CD4-positive, alpha-beta memory T cell (primary cell): ENCODE measurements at regions of chr18 and their contacts with region 1.

Region 1: DNA sequence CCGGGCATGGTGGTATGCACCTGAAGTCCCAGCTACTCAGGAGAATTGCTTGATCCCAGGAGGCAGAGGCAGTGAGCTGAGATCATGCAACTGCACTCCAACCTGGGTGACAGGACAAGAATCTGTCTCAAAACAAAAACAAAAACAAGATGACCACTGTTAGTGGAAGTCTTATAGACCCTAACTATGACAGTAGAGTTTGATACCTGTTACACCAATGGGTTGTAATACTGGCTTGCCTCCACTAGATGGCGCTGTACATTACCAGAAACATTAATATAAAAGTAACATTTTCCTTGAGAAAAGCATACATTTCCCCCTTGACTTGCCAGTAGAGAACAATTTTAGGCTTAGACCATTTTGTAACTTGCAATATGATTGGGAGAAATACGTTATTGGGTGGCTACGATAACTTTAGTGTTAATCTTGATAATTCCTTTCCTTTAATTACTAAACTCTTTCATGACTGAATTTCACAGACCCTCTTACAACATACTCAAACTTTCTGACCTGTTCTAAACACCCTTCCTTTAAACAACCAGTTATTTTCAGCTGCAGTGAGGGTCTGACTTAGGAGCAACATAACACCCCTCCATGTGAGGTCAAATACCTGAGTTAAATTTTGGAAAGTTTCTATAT is 19.5 kb downstream of the SLC25A52 start:
- DNase-seq: peak; percentile 26 to 50 (median 35)
- H3K4me3 ChIP-seq: no peak overlapping the region
- H3K4me3 Mint-ChIP-seq: no peak overlapping the region
- H3K27ac ChIP-seq: no peak overlapping the region
- H3K27ac Mint-ChIP-seq: no peak overlapping the region
- H3K4me1 ChIP-seq: no peaks in the 10 kb centered on the region
- H3K4me1 Mint-ChIP-seq: no peaks in the 10 kb centered on the region
- H3K27me3 ChIP-seq: no peaks in the 10 kb centered on the region
- H3K27me3 Mint-ChIP-seq: peaks cover 0 to 1% of the 10 kb centered on the region in 2 donors

Region 2: DNA sequence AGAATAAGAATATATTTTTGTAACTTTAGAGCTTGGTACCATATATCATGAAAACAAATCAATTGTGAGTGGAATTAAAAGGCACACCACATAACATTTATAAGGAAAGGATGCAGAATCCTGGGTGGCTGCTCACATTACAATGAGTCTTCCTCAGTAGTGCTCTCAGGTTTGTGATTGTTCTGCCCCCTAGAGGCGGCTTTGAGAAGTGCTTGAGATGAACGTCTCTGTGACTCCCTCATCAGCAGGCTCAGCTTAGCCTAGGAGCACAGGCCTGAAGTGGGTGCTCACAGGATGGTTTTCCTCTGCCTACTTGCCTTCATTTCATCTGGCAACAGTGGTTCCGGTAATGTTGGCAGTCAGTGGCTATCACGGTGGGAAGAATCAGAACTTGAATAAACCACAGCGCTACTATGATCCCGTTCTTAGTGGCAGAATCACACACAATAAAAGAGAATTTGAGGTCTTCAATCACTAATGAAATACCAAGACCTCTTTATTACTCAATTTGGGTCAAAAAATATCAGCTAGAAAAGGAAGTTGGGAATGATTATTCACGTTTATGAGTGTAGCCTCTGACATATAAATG is 18.8 kb before region 1 on chr18:
- CTCF ChIA-PET with region 1: interaction called, 15 read pairs
- POLR2A ChIA-PET with region 1: no interaction called
- intact Hi-C with region 1: no loop called
- DNase-seq: peak; percentile 43 to 61 (median 53)
- H3K4me3 ChIP-seq: no peak overlapping the region
- H3K4me3 Mint-ChIP-seq: no peak overlapping the region
- H3K27ac ChIP-seq: no peak overlapping the region
- H3K27ac Mint-ChIP-seq: no peak overlapping the region
- H3K4me1 ChIP-seq: no peaks in the 10 kb centered on the region
- H3K4me1 Mint-ChIP-seq: peaks cover 0 to 5% (median 0%) of the 10 kb centered on the region in 4 donors
- H3K27me3 ChIP-seq: peaks cover 10% of the 10 kb centered on the region
- H3K27me3 Mint-ChIP-seq: peaks cover 19 to 20% of the 10 kb centered on the region in 2 donors

Region 3: GRCh38 chr18:31819106-31819924 is 78.1 kb after region 1 on chr18:
- CTCF ChIA-PET with region 1: no interaction called
- POLR2A ChIA-PET with region 1: no interaction called
- intact Hi-C with region 1: loop called (anchors 2 kb)
- DNase-seq: peak in 4 of 5 donors; percentile 10 to 29 (median 21)
- H3K4me3 ChIP-seq: no peak overlapping the region
- H3K4me3 Mint-ChIP-seq: no peak overlapping the region
- H3K27ac ChIP-seq: no peak overlapping the region
- H3K27ac Mint-ChIP-seq: no peak overlapping the region
- H3K4me1 ChIP-seq: no peaks in the 10 kb centered on the region
- H3K4me1 Mint-ChIP-seq: no peaks in the 10 kb centered on the region
- H3K27me3 ChIP-seq: no peaks in the 10 kb centered on the region
- H3K27me3 Mint-ChIP-seq: no peaks in the 10 kb centered on the region

Region 4: DNA sequence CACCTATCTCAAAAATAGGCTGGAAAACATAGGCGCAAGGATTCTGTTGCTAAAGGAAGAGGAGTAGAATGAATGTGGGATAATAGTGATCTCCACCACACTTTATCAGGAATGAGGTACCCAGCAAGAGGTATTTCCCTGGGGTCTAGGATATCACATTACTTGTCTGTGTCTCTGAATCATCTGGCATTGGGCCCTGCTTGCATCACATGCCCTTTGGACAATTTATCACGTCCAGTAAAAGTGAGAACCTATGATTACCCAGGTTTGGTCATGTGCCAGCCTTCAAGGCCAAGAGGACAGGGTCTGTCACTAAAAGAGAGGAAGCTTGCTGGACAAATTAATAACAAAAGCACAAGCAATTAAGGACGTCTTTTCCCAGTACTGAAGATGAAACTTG is 213.1 kb after region 1 on chr18:
- CTCF ChIA-PET with region 1: interaction called, 4 read pairs
- POLR2A ChIA-PET with region 1: no interaction called
- intact Hi-C with region 1: loop called (anchors 1 kb)
- DNase-seq: no peak
- H3K4me3 ChIP-seq: no peak overlapping the region
- H3K4me3 Mint-ChIP-seq: no peak overlapping the region
- H3K27ac ChIP-seq: no peak overlapping the region
- H3K27ac Mint-ChIP-seq: no peak overlapping the region
- H3K4me1 ChIP-seq: no peaks in the 10 kb centered on the region
- H3K4me1 Mint-ChIP-seq: peaks cover 0 to 1% (median 0%) of the 10 kb centered on the region in 4 donors
- H3K27me3 ChIP-seq: no peaks in the 10 kb centered on the region
- H3K27me3 Mint-ChIP-seq: peaks cover 2 to 6% of the 10 kb centered on the region in 2 donors

Region 5: GRCh38 chr18:31977270-31977872 is 236.2 kb after region 1 on chr18:
- CTCF ChIA-PET with region 1: interaction called, 14 read pairs
- POLR2A ChIA-PET with region 1: no interaction called
- intact Hi-C with region 1: no loop called
- DNase-seq: peak in 4 of 5 donors; percentile 41 to 49 (median 46)
- H3K4me3 ChIP-seq: no peak overlapping the region
- H3K4me3 Mint-ChIP-seq: no peak overlapping the region
- H3K27ac ChIP-seq: no peak overlapping the region
- H3K27ac Mint-ChIP-seq: no peak overlapping the region
- H3K4me1 ChIP-seq: no peaks in the 10 kb centered on the region
- H3K4me1 Mint-ChIP-seq: peaks cover 2 to 9% (median 4%) of the 10 kb centered on the region in 4 donors
- H3K27me3 ChIP-seq: no peaks in the 10 kb centered on the region
- H3K27me3 Mint-ChIP-seq: no peaks in the 10 kb centered on the region